ENCODE measurements at regions of chr11 and their contacts with region 1.

Region 1: GRCh38 chr11:11036848-11037732 is 179.2 kb upstream of the ZBED5 start:
- DNase-seq: no peak
- ATAC-seq: peak; percentile 52

Region 2: GRCh38 chr11:11157185-11157584 is 120.1 kb after region 1 on chr11:
- intact Hi-C with region 1: loop called (anchors 5 kb)
- DNase-seq: no peak
- ATAC-seq: no peak

Region 3: GRCh38 chr11:11265994-11266606 is 229.0 kb after region 1 on chr11:
- intact Hi-C with region 1: loop called (anchors 2 kb)
- DNase-seq: no peak
- ATAC-seq: peak; percentile 48

Region 4: GRCh38 chr11:11400635-11401232 is 363.6 kb after region 1 on chr11:
- intact Hi-C with region 1: loop called (anchors 5 kb)
- DNase-seq: no peak
- ATAC-seq: no peak

Measured in Right ventricle myocardium inferior (tissue), 1 donor.